ENCODE measurements at regions of chr4 and their contacts with region 1.

Region 1: GRCh38 chr4:98529970-98530569 is 128.3 kb downstream of the TSPAN5 start:
- DNase-seq: no peak

Region 2: DNA sequence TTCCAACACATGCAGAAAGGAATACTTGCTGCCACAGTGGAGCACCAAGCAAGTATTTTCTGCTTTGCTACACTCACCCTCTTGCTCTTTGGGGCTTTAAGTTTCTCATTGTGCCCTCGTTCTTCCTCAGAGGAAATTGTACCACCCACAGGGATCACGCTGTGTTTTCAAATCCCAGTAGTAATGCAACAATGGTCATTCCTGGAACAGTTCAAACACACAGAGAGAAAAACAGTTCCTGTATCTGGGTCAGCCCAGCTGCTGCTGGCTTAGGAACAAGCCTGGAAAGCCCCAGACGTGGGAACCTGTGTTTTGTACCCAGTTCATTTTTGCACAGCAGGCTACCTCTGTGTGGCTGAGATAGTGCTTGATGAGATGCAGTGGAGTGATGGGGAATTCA is 1294.5 kb before region 1 on chr4:
- intact Hi-C with region 1: loop called in 1 of 2 experiments (anchors 5 kb)
- DNase-seq: no peak